Endothelial cell of umbilical vein (primary cell): ENCODE measurements at regions of chr1 and their contacts with region 1.

Region 1: DNA sequence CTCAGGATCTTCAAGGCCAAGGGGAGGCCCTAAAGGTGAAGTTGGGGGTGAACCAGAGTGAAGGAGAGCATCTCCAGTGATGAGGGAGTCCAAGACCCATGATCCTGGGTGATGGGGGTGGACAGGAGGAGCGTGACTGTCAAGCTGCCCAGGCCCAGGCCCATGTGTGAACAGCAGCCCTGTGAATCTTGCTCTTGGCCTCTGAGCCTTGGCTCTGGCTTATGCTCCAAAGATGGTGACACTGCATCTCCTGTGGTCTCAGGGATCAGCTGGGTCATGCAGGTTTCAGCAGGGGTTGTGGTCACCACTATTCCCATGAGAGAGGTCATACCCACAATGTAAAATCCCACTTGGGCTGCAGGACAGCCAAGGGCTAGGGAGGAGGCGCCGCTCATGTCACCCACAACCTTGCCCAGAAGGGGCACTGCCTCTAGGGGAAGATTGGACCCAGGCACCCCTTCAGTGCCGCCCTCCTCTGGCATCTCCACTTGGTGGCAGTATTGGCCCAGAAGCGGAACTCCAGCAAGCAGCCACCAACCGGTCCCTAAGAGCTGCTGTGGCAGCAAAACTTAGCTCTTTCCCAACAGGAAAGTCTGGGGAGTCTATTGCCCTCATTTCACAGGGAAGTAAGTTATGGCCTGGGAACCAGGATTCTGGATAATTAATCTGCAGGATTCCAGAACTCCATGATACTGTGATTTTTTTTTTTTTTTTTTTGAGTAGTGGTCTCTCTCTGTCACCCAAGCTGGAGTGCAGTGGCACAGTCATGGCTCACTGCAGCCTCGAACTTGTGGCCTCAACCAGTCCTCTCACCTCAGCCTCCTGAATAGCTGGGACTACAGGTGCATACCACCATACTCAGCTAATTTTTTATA is 7.5 kb upstream of the WNT3A start:
- DNase-seq: peak; percentile 71
- H3K4me3 ChIP-seq: no peak overlapping the region
- H3K27ac ChIP-seq: no peak overlapping the region
- H3K4me1 ChIP-seq: no peaks in the 10 kb centered on the region
- H3K27me3 ChIP-seq: peaks cover 0 to 4% of the 10 kb centered on the region in 2 experiments
- CTCF ChIP-seq: peak; percentile 75 to 92
- POLR2A ChIP-seq: no peak

Region 2: DNA sequence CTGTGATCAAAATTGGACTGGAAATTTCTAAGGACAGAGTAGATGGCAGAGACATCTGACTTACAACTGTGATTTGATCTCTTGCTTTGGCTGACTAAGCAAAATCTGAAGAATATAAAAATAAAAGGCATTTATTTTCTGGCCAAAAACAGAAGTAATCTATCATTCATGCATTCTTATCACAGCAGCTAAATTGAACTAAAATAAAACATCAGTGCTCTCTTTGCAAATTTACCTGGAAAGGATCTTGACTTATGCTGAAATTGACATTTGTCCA is 517.3 kb before region 1 on chr1:
- CTCF ChIA-PET with region 1: interaction called, 11 read pairs
- POLR2A ChIA-PET with region 1: no interaction called
- dilution Hi-C with region 1: no loop called
- intact Hi-C with region 1: loop called (anchors 1 kb)
- DNase-seq: no peak
- H3K4me3 ChIP-seq: no peak overlapping the region
- H3K27ac ChIP-seq: no peak overlapping the region
- H3K4me1 ChIP-seq: no peaks in the 10 kb centered on the region
- H3K27me3 ChIP-seq: peaks cover 2 to 28% of the 10 kb centered on the region in 2 experiments
- CTCF ChIP-seq: no peak
- POLR2A ChIP-seq: no peak

Region 3: GRCh38 chr1:227518876-227519275 is 480.4 kb before region 1 on chr1:
- CTCF ChIA-PET with region 1: no interaction called
- POLR2A ChIA-PET with region 1: no interaction called
- dilution Hi-C with region 1: no loop called
- intact Hi-C with region 1: no loop called
- DNase-seq: no peak
- H3K4me3 ChIP-seq: no peak overlapping the region
- H3K27ac ChIP-seq: no peak overlapping the region
- H3K4me1 ChIP-seq: no peaks in the 10 kb centered on the region
- H3K27me3 ChIP-seq: peaks cover 4 to 6% of the 10 kb centered on the region in 2 experiments
- CTCF ChIP-seq: no peak
- POLR2A ChIP-seq: no peak

Region 4: GRCh38 chr1:227961651-227962225 is 37.6 kb before region 1 on chr1:
- CTCF ChIA-PET with region 1: no interaction called
- POLR2A ChIA-PET with region 1: no interaction called
- dilution Hi-C with region 1: no loop called
- intact Hi-C with region 1: no loop called
- DNase-seq: no peak
- H3K4me3 ChIP-seq: no peak overlapping the region
- H3K27ac ChIP-seq: no peak overlapping the region
- H3K4me1 ChIP-seq: no peaks in the 10 kb centered on the region
- H3K27me3 ChIP-seq: peaks cover 0 to 16% of the 10 kb centered on the region in 2 experiments
- CTCF ChIP-seq: no peak
- POLR2A ChIP-seq: no peak

Region 5: GRCh38 chr1:228082135-228082891 is 83.0 kb after region 1 on chr1 and contains the start of gene ARF1:
- CTCF ChIA-PET with region 1: interaction called, 15 read pairs
- POLR2A ChIA-PET with region 1: interaction called, 3 read pairs
- dilution Hi-C with region 1: no loop called
- intact Hi-C with region 1: loop called (anchors 5 kb)
- DNase-seq: peak; percentile 94
- H3K4me3 ChIP-seq: peak within 1 kb of the TSS; percentile 51 to 86 (median 73)
- H3K27ac ChIP-seq: peak within 1 kb of the TSS; percentile 94
- H3K4me1 ChIP-seq: peaks cover 39% of the 10 kb centered on the region
- H3K27me3 ChIP-seq: no peaks in the 10 kb centered on the region
- CTCF ChIP-seq: no peak
- POLR2A ChIP-seq: peak; percentile 92
- total RNA-seq, gene ARF1: 488 and 499 TPM in 2 replicates

Region 6: DNA sequence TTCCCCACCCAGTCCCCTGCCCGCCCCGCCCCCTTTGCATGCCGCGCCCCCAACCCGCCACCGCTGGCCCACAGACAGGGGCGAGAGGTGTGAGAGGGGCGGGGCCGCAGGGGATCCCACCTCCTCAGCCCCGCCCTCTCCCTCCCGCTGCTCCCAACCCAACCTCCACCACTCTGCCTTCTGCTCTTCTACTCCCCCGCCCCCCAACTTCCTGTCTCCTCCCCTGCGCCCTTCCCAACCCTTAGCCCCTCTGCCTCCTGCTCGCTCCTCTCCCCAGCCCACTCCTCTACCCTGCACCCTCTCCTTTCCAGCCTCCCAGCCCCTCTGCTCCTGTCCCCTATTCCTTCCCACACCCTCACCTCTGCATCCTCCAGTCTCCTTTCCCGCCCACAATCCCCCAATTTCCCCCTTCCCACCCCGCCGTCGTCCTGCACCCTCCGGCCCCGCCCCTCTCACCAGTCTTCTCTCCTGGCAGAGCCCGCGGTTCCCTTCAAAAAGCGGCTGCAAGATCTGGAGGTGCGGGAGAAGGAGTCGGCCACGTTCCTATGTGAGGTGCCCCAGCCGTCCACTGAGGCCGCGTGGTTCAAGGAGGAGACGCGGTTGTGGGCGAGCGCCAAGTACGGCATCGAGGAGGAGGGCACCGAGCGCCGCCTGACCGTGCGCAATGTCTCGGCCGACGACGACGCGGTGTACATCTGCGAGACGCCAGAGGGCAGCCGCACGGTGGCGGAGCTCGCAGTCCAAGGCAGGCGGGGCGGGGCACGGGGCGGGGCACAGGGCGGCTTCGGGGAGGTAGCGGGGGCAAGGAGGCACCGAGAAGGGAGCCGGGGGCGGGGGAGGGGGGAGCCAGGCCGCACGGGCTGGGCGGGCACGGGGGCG is 213.9 kb after region 1 on chr1:
- CTCF ChIA-PET with region 1: interaction called, 12 read pairs
- POLR2A ChIA-PET with region 1: no interaction called
- dilution Hi-C with region 1: no loop called
- intact Hi-C with region 1: loop called (anchors 10 kb)
- DNase-seq: peak; percentile 63
- H3K4me3 ChIP-seq: peak overlapping the region in 1 of 3 experiments; percentile 26
- H3K27ac ChIP-seq: no peak overlapping the region
- H3K4me1 ChIP-seq: no peaks in the 10 kb centered on the region
- H3K27me3 ChIP-seq: peaks cover 4 to 16% of the 10 kb centered on the region in 2 experiments
- CTCF ChIP-seq: peak; percentile 33 to 73
- POLR2A ChIP-seq: no peak

Region 7: GRCh38 chr1:228393248-228393699 is 394.0 kb after region 1 on chr1:
- CTCF ChIA-PET with region 1: interaction called, 41 read pairs
- POLR2A ChIA-PET with region 1: no interaction called
- dilution Hi-C with region 1: no loop called
- intact Hi-C with region 1: loop called (anchors 1 kb)
- DNase-seq: peak; percentile 75
- H3K4me3 ChIP-seq: no peak overlapping the region
- H3K27ac ChIP-seq: no peak overlapping the region
- H3K4me1 ChIP-seq: peaks cover 5% of the 10 kb centered on the region
- H3K27me3 ChIP-seq: no peaks in the 10 kb centered on the region
- CTCF ChIP-seq: peak; percentile 69 to 85
- POLR2A ChIP-seq: no peak